ENCODE measurements at regions of chr9 and their contacts with region 1.

Region 1: GRCh38 chr9:35882263-35882848 is 12.2 kb upstream of the OR13J1 start:
- DNase-seq: peak; percentile 84 to 87
- ATAC-seq: peak in 7 of 8 donors; percentile 81 to 92 (median 85)
- H3K4me3 ChIP-seq: no peak overlapping the region
- H3K27ac ChIP-seq: no peak overlapping the region
- H3K4me1 ChIP-seq: no peaks in the 10 kb centered on the region
- H3K27me3 ChIP-seq: peaks cover 0 to 9% (median 0%) of the 10 kb centered on the region in 7 donors
- CTCF ChIP-seq: peak; percentile 89 to 100 (median 98)

Region 2: GRCh38 chr9:35829084-35829763 is 53.1 kb before region 1 on chr9 and contains the start of gene TMEM8B:
- intact Hi-C with region 1: loop called in 8 of 10 experiments (anchors 2 to 5 kb)
- DNase-seq: peak; percentile 96 to 98
- ATAC-seq: peak; percentile 91 to 94 (median 92)
- H3K4me3 ChIP-seq: peak within 1 kb of the TSS; percentile 70 to 87 (median 82)
- H3K27ac ChIP-seq: peak within 1 kb of the TSS; percentile 91 to 98 (median 96)
- H3K4me1 ChIP-seq: peaks cover 4 to 53% (median 39%) of the 10 kb centered on the region in 9 donors
- H3K27me3 ChIP-seq: no peaks in the 10 kb centered on the region
- CTCF ChIP-seq: no peak
- total RNA-seq, gene TMEM8B: 13.6 to 22.9 (median 20.5) TPM

Region 3: DNA sequence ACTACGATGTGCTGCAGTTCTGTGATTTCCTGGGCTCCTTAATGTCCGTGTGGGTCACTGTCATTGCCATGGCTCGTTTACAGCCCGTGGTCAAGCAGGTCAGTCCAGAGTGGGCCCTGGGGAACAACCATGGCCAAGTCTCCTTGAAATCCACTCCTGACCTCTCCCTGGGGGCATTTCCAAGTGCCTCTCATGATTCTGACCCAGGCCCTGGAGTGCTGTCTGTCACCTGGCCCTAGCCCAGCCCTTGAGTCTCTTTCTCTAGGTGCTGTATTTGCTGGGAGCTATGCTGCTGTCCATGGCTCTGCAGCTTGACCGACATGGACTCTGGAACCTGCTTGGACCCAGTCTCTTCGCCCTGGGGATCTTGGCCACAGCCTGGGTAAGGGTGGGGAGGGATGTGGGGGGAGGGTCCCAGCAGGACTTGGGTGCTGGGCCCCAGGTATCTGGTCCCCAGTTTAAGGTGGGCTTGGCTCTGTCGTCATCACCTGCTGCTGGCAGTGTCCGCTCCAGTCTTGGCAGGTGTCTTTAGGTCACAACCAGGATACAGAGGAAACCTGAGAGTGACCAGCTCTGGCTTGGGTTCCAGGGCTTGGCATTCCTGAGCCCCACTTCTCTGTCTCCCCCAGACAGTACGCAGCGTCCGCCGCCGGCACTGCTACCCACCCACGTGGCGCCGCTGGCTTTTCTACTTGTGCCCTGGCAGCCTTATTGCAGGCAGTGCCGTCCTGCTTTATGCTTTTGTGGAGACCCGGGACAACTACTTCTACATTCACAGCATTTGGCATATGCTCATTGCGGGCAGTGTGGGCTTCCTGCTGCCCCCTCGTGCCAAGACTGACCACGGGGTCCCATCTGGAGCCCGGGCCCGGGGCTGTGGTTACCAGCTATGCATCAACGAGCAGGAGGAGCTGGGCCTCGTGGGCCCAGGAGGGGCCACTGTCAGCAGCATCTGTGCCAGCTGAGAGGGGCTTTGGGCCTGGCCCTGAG is 29.2 kb before region 1 on chr9:
- intact Hi-C with region 1: loop called in 1 of 10 experiments (anchors 5 kb)
- DNase-seq: no peak
- ATAC-seq: peak in 1 of 8 donors; percentile 21
- H3K4me3 ChIP-seq: no peak overlapping the region
- H3K27ac ChIP-seq: no peak overlapping the region
- H3K4me1 ChIP-seq: peaks cover 0 to 10% (median 1%) of the 10 kb centered on the region in 9 donors
- H3K27me3 ChIP-seq: peaks cover 0 to 79% (median 6%) of the 10 kb centered on the region in 7 donors
- CTCF ChIP-seq: no peak

Region 4: GRCh38 chr9:36612946-36613345 is 730.6 kb after region 1 on chr9:
- intact Hi-C with region 1: no loop called
- DNase-seq: no peak
- ATAC-seq: no peak
- H3K4me3 ChIP-seq: no peak overlapping the region
- H3K27ac ChIP-seq: no peak overlapping the region
- H3K4me1 ChIP-seq: no peaks in the 10 kb centered on the region
- H3K27me3 ChIP-seq: no peaks in the 10 kb centered on the region
- CTCF ChIP-seq: no peak

Measured in heart right ventricle (tissue), 16 donors.